ENCODE measurements at regions of chr5 and their contacts with region 1.

Region 1: GRCh38 chr5:34522599-34523386 is 133.3 kb upstream of the RAI14 start:
- DNase-seq: peak; percentile 63 to 78 (median 64)
- ATAC-seq: peak; percentile 76 to 83
- H3K4me3 ChIP-seq: no peak overlapping the region
- H3K27ac ChIP-seq: no peak overlapping the region
- H3K4me1 ChIP-seq: no peaks in the 10 kb centered on the region
- H3K27me3 ChIP-seq: no peaks in the 10 kb centered on the region

Region 2: GRCh38 chr5:34639852-34640605 is 117.2 kb after region 1 on chr5:
- intact Hi-C with region 1: no loop called
- DNase-seq: no peak
- ATAC-seq: no peak
- H3K4me3 ChIP-seq: no peak overlapping the region
- H3K27ac ChIP-seq: no peak overlapping the region
- H3K4me1 ChIP-seq: no peaks in the 10 kb centered on the region
- H3K27me3 ChIP-seq: no peaks in the 10 kb centered on the region

Region 3: DNA sequence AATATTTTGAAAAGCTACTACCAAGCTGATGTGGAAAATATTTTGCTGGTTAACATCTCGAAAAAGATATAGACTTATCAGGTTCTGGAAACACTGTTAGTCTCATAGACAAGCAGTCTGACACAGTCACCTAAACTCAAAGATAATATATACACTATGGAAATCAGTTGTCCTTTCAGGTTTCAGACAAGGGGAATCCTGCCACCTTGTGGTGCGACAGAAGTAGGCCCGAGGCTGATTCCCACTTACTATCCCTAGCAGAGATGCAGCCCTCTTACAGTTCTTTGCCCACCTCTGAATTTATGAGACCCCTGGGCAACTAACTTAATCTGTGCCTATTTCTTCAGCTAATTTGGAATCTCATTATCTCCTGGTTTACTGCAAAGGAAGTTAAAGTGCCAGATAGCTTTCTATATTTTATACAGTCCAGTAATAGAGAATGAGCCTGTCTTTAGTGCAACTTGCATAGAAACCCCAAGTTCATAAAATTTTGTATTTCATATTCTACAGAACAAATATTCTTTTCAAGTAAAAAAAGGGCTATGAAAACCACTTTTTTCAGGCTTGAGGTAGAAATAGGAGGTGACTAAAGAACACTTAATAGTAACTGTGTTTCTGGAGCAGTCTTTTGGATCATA is 375.6 kb after region 1 on chr5:
- intact Hi-C with region 1: loop called (anchors 2 to 10 kb)
- DNase-seq: peak; percentile 51 to 80 (median 69)
- ATAC-seq: peak; percentile 85 to 86
- H3K4me3 ChIP-seq: no peak overlapping the region
- H3K27ac ChIP-seq: no peak overlapping the region
- H3K4me1 ChIP-seq: no peaks in the 10 kb centered on the region
- H3K27me3 ChIP-seq: no peaks in the 10 kb centered on the region